Mucosa of descending colon (tissue), 3 donors: ENCODE measurements at regions of chr21 and their contacts with region 1.

Region 1: GRCh38 chr21:14403681-14404318 is 20.9 kb upstream of the HSPA13 start:
- DNase-seq: peak in 1 of 3 donors; percentile 15
- ATAC-seq: peak; percentile 55
- H3K4me3 ChIP-seq: no peak overlapping the region
- H3K4me1 ChIP-seq: no peaks in the 10 kb centered on the region
- CTCF ChIP-seq: no peak

Region 2: GRCh38 chr21:15592271-15592860 is 1188.6 kb after region 1 on chr21:
- intact Hi-C with region 1: loop called in 1 of 2 experiments (anchors 10 kb)
- DNase-seq: peak in 1 of 3 donors; percentile 37
- ATAC-seq: peak; percentile 60
- H3K4me3 ChIP-seq: no peak overlapping the region
- H3K4me1 ChIP-seq: no peaks in the 10 kb centered on the region
- CTCF ChIP-seq: peak; percentile 22